ENCODE measurements at regions of chr16 and their contacts with region 1.

Region 1: GRCh38 chr16:70646260-70647241 is at the start of gene IL34:
- DNase-seq: peak; percentile 59 to 70
- ATAC-seq: peak; percentile 71
- H3K4me3 ChIP-seq: no peak within 1 kb of the TSS
- H3K27ac ChIP-seq: peak within 1 kb of the TSS in 1 of 2 donors; percentile 33
- H3K4me1 ChIP-seq: no peaks in the 10 kb centered on the region
- H3K27me3 ChIP-seq: no peaks in the 10 kb centered on the region
- total RNA-seq, gene IL34: 14.2 to 21.9 TPM

Region 2: DNA sequence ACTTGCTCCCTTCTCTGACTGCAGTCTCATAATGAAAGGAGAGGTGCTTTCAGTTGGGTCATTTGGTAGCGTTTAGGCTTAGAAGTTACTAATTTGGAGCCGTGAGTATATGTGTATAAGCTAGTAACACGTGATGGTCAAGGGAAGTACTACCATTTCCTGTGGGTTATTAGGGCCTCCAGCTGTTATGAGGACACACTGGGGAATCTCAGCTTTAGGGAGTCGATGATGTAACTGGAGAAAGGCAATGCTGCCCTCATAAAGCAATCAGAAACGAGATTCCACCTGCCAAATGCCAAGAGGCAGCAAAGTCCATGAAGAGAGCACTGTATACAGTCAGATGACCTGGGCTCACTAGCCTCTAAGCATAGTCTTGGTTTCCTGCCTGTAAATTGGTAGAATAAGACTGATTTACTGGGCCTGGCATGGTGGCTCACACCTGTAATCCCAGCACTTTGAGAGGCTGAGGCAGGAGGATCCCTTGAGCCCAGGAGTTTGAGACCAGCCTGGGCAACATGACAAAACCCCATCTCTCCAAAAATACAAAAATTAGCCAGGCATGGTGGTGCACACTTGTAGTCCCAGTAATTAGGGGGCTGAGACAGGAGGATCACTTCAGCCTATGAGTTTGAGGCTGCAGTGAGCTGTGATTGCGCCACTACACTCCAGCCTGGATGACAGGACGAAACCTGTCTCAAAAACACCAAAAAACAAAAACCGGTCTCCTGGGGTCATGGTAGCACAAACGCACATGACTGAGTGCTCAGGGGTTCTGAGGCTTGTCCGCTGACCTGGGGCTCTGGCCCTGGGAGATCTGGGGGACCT is 69.9 kb before region 1 on chr16:
- intact Hi-C with region 1: loop called (anchors 5 kb)
- DNase-seq: no peak
- ATAC-seq: no peak
- H3K4me3 ChIP-seq: no peak overlapping the region
- H3K27ac ChIP-seq: peak overlapping the region; percentile 69 to 94
- H3K4me1 ChIP-seq: peaks cover 7% of the 10 kb centered on the region in 2 donors
- H3K27me3 ChIP-seq: no peaks in the 10 kb centered on the region

Region 3: GRCh38 chr16:70737377-70738082 is 91.0 kb after region 1 on chr16:
- intact Hi-C with region 1: no loop called
- DNase-seq: peak in 1 of 2 donors; percentile 87
- ATAC-seq: peak; percentile 69
- H3K4me3 ChIP-seq: no peak overlapping the region
- H3K27ac ChIP-seq: peak overlapping the region; percentile 16 to 91
- H3K4me1 ChIP-seq: no peaks in the 10 kb centered on the region
- H3K27me3 ChIP-seq: no peaks in the 10 kb centered on the region

Measured in aorta (tissue), 5 donors.